Endothelial cell of umbilical vein (primary cell): ENCODE measurements at regions of chr15 and their contacts with region 1.

Region 1: DNA sequence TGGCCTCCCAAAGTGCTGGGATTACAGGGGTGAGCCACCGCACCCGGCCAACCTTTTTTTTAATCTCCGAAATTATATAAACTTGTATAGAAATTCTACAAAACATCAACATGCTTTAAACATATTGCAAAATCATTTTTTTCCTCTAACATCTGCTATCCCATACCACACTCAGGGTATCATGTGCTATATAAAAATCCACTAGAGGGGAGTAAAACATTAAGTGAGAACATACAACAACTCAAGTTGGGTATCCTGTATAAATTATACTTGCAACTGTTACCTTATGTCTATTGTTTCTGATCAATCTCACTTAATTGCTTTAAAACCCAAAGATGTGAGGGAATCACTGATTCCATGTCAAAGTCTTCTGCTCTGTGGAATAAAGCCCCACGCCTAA is 71.9 kb upstream of the FBN1 start:
- DNase-seq: no peak
- H3K4me3 ChIP-seq: no peak overlapping the region
- H3K27ac ChIP-seq: no peak overlapping the region
- H3K4me1 ChIP-seq: peaks cover 9% of the 10 kb centered on the region
- H3K27me3 ChIP-seq: no peaks in the 10 kb centered on the region
- CTCF ChIP-seq: no peak
- POLR2A ChIP-seq: no peak

Region 2: GRCh38 chr15:48800811-48801455 is 83.5 kb after region 1 on chr15:
- CTCF ChIA-PET with region 1: interaction called, 13 read pairs
- POLR2A ChIA-PET with region 1: no interaction called
- dilution Hi-C with region 1: no loop called
- intact Hi-C with region 1: loop called (anchors 2 kb)
- DNase-seq: peak; percentile 72
- H3K4me3 ChIP-seq: no peak overlapping the region
- H3K27ac ChIP-seq: no peak overlapping the region
- H3K4me1 ChIP-seq: peaks cover 1% of the 10 kb centered on the region
- H3K27me3 ChIP-seq: no peaks in the 10 kb centered on the region
- CTCF ChIP-seq: peak; percentile 24 to 25
- POLR2A ChIP-seq: no peak

Region 3: GRCh38 chr15:48855501-48856440 is 138.3 kb after region 1 on chr15:
- CTCF ChIA-PET with region 1: no interaction called
- POLR2A ChIA-PET with region 1: no interaction called
- dilution Hi-C with region 1: no loop called
- intact Hi-C with region 1: loop called (anchors 1 kb)
- DNase-seq: peak; percentile 61
- H3K4me3 ChIP-seq: no peak overlapping the region
- H3K27ac ChIP-seq: no peak overlapping the region
- H3K4me1 ChIP-seq: no peaks in the 10 kb centered on the region
- H3K27me3 ChIP-seq: no peaks in the 10 kb centered on the region
- CTCF ChIP-seq: peak; percentile 43 to 59
- POLR2A ChIP-seq: no peak